ENCODE measurements at regions of chr17 and their contacts with region 1.

Region 1: DNA sequence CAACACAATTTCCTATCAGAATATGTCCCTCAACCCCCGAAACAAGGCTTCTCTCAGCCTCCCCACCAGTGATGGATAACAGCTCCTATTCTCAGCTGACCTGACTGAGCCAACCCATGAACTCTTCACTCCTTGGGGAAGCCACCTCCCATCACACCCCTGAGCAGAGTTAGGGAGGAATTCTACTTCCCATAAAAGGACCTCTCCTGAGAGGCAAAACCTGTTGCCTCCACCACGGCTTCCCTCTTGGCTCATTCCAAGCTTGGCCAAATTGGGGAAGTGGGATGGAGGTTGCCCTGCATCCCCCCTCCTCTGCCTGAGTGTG is 5.7 kb upstream of the RASL10B start:
- DNase-seq: no peak
- ATAC-seq: no peak
- H3K4me3 ChIP-seq: no peak overlapping the region
- H3K27ac ChIP-seq: no peak overlapping the region
- H3K4me1 ChIP-seq: peaks cover 11 to 20% of the 10 kb centered on the region in 2 donors
- H3K27me3 ChIP-seq: no peaks in the 10 kb centered on the region
- CTCF ChIP-seq: no peak
- POLR2A ChIP-seq: no peak

Region 2: DNA sequence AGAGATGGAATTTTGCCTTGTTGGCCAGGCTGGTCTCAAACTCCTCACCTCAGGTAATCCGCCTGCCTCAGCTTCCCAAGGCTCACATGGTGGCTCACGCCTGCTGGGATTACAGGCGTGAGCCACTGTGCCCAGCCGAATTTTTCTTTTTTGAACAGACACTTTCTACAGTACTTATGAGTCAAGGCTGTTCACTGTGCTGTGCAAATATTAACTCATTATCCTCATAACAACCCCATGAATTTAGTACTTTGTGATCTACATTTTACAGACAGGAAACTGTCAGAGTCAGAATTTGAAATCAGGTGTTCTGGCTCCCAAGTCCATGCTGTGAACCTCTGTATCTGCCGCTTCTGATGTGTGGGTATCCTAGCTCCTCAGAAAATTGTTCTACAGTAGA is 20.1 kb before region 1 on chr17:
- in situ Hi-C with region 1: no loop called
- intact Hi-C with region 1: loop called (anchors 2 kb)
- DNase-seq: no peak
- ATAC-seq: no peak
- H3K4me3 ChIP-seq: no peak overlapping the region
- H3K27ac ChIP-seq: no peak overlapping the region
- H3K4me1 ChIP-seq: peaks cover 27 to 29% of the 10 kb centered on the region in 2 donors
- H3K27me3 ChIP-seq: no peaks in the 10 kb centered on the region
- CTCF ChIP-seq: no peak
- POLR2A ChIP-seq: no peak

Region 3: DNA sequence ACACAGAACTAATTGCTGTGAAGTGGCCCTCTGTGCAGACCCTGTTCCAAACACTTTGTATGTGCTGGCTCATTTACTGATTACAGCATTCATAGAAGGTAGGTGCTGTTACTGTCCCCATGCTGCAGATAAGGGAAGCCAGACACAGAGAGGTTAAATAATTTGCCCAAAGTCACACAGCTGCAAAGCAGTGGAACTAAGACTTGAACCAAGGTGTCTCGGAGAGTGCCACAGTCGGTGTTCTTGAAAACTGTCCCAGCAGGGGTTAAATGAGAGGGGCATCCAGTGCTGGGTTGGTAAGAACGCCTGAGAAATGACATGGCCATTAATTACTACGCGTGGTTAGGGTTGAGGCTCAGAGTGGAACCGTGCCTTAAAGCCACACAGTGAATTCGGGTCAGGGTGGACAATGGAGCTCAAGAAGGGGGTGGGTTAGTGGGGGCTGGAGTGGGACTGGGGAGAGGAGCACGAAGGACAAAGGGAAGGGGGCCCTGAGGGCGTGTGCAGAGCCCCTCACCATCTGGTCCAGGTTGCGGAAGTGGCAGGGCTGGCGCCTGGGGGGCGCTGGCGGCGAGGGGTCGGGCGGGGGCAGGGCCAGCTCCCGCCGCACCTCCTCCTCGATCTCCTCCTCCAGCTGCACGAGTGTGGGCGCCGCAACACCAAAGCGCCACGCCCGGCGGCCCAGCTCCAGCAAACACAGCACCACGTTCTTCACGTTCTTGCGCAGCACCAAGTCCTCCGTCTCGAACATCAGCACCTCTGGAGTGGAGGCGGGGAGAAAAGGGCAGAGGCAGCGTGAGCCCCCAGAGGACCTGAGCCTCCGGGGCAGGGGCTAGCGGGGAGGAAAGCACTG is 24.0 kb after region 1 on chr17:
- in situ Hi-C with region 1: no loop called
- intact Hi-C with region 1: no loop called
- DNase-seq: no peak
- ATAC-seq: no peak
- H3K4me3 ChIP-seq: no peak overlapping the region
- H3K27ac ChIP-seq: no peak overlapping the region
- H3K4me1 ChIP-seq: peaks cover 11% of the 10 kb centered on the region in 2 donors
- H3K27me3 ChIP-seq: peaks cover 11 to 19% (median 14%) of the 10 kb centered on the region in 3 donors
- CTCF ChIP-seq: no peak
- POLR2A ChIP-seq: no peak

Region 4: DNA sequence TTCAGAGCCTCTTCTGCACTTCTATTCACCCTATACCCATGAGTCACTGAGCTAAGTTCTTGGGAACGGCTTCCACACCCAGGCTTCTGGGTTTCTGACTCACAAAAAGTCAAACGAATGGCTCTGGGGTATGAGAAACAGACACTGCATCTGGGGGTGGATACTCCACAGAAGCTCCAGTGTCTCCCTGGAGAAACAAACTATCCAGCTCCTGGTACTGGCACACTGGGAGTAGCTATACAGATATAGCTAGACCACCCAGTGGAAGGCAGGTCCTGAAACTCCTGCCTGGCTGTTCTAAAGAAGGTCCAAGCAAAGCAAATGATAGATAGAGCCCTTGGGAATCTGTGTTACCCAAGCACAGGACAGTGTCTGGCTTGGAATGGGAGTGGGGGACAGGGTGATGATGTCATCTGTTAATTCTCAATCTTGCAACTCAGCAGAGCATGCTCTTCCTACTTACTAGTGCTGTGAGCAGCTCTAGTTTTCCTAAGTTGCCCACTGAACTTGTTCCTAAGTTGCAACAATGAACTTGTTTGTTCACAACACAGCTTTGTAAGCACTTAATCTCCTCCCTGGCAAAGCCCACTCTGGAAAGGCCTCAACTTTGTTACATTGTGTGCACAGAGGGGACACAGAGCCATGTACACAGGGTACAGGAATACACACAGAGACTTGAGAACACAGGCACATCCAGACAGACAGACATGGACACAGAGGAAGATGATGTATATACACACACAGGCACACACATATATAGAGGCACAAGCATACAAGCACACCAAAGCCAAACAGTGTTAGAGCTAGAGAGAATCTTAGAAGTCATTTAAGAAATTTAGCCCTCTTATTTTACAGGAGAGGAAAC is 63.0 kb after region 1 on chr17:
- in situ Hi-C with region 1: no loop called
- intact Hi-C with region 1: no loop called
- DNase-seq: no peak
- ATAC-seq: peak; percentile 69 to 81
- H3K4me3 ChIP-seq: no peak overlapping the region
- H3K27ac ChIP-seq: peak overlapping the region in 1 of 4 donors; percentile 26
- H3K4me1 ChIP-seq: peaks cover 1 to 2% of the 10 kb centered on the region in 2 donors
- H3K27me3 ChIP-seq: peaks cover 2 to 15% (median 10%) of the 10 kb centered on the region in 3 donors
- CTCF ChIP-seq: no peak
- POLR2A ChIP-seq: no peak

Measured in gastrocnemius medialis (tissue), 4 donors.